ENCODE measurements at regions of chr6 and their contacts with region 1.

Region 1: GRCh38 chr6:134174672-134175198 is 122.3 kb upstream of the SLC2A12 start:
- DNase-seq: peak; percentile 97
- H3K4me3 Mint-ChIP-seq: peak overlapping the region; percentile 91
- H3K27ac Mint-ChIP-seq: peak overlapping the region; percentile 97
- H3K4me1 Mint-ChIP-seq: peaks cover 62% of the 10 kb centered on the region
- H3K27me3 Mint-ChIP-seq: no peaks in the 10 kb centered on the region

Region 2: GRCh38 chr6:134235937-134236751 is 61.4 kb after region 1 on chr6:
- intact Hi-C with region 1: loop called (anchors 2 kb)
- DNase-seq: peak; percentile 69
- H3K4me3 Mint-ChIP-seq: peak overlapping the region; percentile 51
- H3K27ac Mint-ChIP-seq: peak overlapping the region; percentile 88
- H3K4me1 Mint-ChIP-seq: peaks cover 40% of the 10 kb centered on the region
- H3K27me3 Mint-ChIP-seq: no peaks in the 10 kb centered on the region

Region 3: DNA sequence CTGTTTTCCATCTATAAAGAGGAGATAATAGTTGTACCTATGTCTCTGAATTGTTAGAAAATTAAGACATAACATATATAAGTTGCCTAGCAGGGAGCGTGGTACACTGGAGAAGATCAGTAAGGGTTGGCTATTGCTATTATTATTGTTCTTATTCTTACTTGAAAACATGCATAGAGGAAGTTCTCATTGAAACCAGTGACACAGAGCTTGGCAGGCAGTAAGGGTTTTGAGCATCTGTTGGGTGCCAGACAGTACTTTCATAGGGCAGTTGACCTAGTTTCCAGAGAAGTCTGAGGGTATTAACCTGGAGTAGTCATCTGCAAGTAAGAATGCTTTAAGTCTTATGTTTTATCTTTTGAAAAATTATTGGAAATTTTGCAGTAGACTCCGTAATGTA is 156.5 kb after region 1 on chr6:
- intact Hi-C with region 1: no loop called
- DNase-seq: no peak
- H3K4me3 Mint-ChIP-seq: no peak overlapping the region
- H3K27ac Mint-ChIP-seq: no peak overlapping the region
- H3K4me1 Mint-ChIP-seq: peaks cover 4% of the 10 kb centered on the region
- H3K27me3 Mint-ChIP-seq: no peaks in the 10 kb centered on the region

Region 4: DNA sequence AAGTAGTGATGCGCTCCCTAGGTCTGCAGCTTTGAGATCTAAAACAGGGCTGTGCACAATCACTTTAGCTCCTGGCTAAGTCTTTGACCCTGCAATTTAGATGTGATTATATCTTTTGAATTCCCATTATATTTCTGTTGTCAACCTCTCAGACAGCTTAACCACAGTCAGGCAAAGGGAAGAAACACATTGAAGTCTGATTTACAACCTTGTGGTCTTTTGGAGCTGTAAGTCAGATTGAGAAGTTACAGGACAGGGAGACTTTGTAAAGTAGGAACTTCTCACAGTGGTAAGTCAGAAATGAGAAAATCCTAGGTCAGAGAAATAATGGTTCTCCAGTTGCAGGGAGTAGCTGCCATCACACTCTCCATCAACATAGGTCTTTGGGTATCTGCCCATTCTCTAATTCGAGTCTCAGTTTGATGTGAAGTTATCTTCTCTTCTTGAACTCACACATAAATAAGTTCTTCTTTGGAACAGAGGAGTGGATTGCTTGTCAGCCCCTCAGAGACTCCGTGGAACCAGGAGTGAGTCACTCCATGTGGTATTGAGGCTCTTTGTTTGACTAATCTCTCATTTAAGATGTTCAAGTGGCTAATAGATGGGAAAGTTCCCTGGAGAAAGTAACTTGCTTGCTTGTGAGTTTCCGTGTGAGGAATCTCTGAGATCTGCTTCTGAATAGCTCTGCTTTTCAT is 178.2 kb after region 1 on chr6:
- intact Hi-C with region 1: loop called (anchors 2 kb)
- DNase-seq: no peak
- H3K4me3 Mint-ChIP-seq: peak overlapping the region; percentile 81
- H3K27ac Mint-ChIP-seq: peak overlapping the region; percentile 91
- H3K4me1 Mint-ChIP-seq: peaks cover 31% of the 10 kb centered on the region
- H3K27me3 Mint-ChIP-seq: no peaks in the 10 kb centered on the region

Region 5: DNA sequence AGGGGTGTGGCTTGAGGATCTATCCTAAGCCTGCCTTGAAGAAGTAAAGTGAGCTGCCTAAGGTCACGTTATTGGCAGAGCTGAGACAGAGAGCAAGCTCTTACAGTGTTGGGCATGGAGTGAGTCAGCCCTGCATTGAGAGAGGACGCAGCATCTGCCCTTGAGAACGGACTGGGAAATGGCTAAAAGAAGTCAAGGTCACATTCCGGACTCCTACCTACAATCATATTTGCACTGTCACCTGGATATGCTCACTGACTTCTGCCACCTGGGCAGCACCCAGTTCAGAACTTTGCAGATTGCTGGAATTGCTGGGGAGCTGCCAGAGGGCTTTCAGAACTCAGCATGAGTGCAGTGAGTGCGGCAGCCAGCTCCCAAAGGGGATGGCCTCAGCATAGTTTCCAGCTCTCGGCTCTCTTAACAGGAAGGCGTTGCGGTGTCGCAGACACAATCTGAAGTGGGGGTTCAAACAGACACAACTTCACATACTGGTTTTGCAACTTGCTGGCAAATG is 342.5 kb after region 1 on chr6:
- intact Hi-C with region 1: loop called (anchors 5 kb)
- DNase-seq: no peak
- H3K4me3 Mint-ChIP-seq: no peak overlapping the region
- H3K27ac Mint-ChIP-seq: peak overlapping the region; percentile 35
- H3K4me1 Mint-ChIP-seq: peaks cover 29% of the 10 kb centered on the region
- H3K27me3 Mint-ChIP-seq: no peaks in the 10 kb centered on the region

Region 6: DNA sequence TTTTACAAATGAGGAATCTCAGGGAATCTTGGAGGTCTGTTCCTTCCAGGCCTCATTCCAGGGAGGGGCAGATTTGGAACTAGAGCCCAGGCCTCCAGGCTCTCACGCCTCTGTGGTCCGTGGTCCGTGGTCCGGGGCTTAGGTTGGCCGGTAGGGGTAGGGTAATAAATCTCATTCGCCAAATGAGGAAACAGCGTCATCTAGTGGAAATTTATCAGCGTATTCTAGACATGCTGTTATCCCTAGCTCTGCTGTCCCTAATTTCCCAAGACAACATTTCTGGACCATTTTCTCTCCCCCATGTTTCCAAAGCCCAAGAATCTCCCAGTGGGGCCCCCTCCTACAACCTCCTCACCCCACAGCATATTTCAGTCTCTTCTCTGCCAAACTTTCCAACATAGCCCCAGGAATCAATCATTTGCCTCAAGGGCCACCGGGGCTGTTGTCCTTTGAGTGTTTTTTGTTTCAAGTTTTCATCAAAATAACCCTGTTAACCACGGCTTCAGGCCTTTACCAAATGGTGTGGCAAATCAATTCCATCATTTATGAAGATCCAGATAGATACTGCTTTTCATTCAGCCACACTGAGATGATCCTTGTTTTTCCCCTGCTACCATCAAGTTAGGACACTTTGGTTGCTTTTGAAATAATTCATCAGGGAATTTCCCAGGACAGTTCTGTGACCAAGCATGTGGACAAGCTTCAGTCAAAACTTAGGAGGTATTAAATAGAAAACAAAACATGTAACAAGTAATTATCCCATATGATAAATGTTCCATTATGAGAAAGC is 648.4 kb after region 1 on chr6:
- intact Hi-C with region 1: loop called (anchors 1 kb)
- DNase-seq: peak; percentile 81
- H3K4me3 Mint-ChIP-seq: no peak overlapping the region
- H3K27ac Mint-ChIP-seq: peak overlapping the region; percentile 16
- H3K4me1 Mint-ChIP-seq: peaks cover 6% of the 10 kb centered on the region
- H3K27me3 Mint-ChIP-seq: peaks cover 3% of the 10 kb centered on the region

Region 7: DNA sequence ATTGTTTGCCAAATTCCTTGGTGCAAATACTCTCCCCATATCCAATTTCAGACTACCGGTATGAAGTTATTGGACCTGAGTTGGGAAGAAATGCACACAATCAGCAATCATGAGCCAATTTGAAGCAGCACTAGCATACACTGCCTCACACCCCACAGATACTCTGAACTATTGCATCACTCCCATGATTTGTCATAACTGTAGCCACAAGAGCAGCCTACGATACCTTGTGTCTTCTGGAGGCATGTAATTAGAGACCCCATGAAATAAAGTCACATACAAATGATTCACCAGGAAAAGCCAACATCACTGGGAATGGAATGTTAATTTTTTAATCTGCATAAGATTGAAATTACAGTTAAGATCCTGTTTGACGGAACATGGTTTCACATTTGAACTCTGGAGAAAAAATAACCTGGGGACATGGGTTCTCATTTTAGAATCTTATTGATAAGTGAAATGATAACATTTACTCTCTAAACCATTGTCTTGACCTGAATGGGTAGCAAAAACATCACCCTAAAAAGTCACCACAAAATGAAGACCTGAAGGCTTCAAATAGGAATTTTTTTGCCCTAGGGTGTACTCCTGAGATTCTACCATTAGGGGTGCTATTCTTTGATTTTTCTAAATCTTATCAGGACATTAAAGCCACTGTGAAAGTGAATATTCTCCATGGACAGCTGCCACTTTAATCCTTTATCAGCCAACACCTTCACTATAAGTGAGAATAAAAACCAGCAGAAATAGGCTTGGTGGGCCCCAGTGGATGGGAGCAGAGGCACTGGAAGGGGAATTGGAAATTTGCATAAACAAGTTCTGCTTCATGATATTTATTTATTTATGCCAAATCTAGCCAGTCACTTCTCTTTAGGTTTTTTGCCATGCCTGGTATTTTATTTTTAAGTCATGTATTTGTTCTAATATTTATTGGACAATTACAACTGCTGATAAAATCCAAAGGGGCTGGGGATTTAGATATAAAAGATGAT is 914.4 kb after region 1 on chr6:
- intact Hi-C with region 1: loop called (anchors 5 kb)
- DNase-seq: peak; percentile 85
- H3K4me3 Mint-ChIP-seq: peak overlapping the region; percentile 59
- H3K27ac Mint-ChIP-seq: peak overlapping the region; percentile 90
- H3K4me1 Mint-ChIP-seq: peaks cover 75% of the 10 kb centered on the region
- H3K27me3 Mint-ChIP-seq: no peaks in the 10 kb centered on the region